Activated CD4-positive, alpha-beta T cell treated with anti-CD3 and anti-CD28 coated beads, Interleukin-2, amount 10 ng/mL, durations not matched to agents 7 days and 5 days (primary cell): ENCODE measurements at regions of chr11 and their contacts with region 1.

Region 1: GRCh38 chr11:119084663-119085436 is at the start of gene HMBS:
- DNase-seq: peak; percentile 93
- H3K4me3 Mint-ChIP-seq: peak within 1 kb of the TSS; percentile 96
- H3K27ac Mint-ChIP-seq: peak within 1 kb of the TSS; percentile 94
- H3K4me1 Mint-ChIP-seq: peaks cover 44% of the 10 kb centered on the region
- H3K27me3 Mint-ChIP-seq: no peaks in the 10 kb centered on the region
- total RNA-seq, gene HMBS: 21.6 to 23.2 TPM

Region 2: GRCh38 chr11:119095066-119095880 is 10.4 kb after region 1 on chr11:
- CTCF ChIA-PET with region 1: interaction called, 13 read pairs
- POLR2A ChIA-PET with region 1: interaction called, 7 read pairs
- DNase-seq: peak; percentile 100
- H3K4me3 Mint-ChIP-seq: peak overlapping the region; percentile 94
- H3K27ac Mint-ChIP-seq: peak overlapping the region; percentile 95
- H3K4me1 Mint-ChIP-seq: peaks cover 64% of the 10 kb centered on the region
- H3K27me3 Mint-ChIP-seq: no peaks in the 10 kb centered on the region